Pancreas (tissue), 10 donors: ENCODE measurements at regions of chr3 and their contacts with region 1.

Region 1: DNA sequence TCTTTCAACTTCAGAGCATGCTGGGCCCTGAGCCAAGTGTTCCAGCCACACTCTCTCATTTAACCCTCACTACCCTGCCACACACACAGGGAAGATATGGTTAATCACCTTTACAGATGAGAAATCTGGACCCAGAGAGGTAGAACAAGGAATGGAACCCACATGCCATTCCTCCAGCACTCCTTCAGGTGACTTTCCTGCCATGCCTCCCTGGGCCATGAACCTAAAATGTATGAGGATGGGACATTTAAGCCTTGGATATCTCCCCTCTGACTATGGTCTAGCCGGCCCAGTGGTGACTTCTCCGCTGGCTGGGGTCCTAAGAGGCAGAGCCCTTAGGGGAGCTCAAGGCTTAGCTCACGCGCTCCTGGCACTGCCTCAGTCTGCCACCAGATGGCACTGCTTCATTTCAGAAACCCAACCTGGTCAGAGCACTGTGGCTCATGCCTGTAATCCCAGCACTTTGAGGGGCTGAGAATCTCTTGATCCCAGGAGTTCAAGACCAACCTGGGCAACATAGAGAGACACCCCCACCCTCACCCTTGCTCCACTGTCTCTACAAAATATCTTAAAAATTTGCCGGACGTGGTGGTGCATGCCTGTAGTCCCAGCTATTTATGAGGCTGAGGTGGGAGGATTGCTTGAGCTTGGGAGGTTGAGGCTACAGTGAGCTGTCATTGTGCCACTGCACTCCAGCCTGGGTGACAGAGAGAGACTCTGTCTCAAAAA is 2.2 kb upstream of the DCAF1 start:
- DNase-seq: peak; percentile 60 to 89 (median 80)
- ATAC-seq: peak in 3 of 4 donors; percentile 18 to 22 (median 20)
- H3K4me3 ChIP-seq: no peak overlapping the region
- H3K27ac ChIP-seq: no peak overlapping the region
- H3K4me1 ChIP-seq: peaks cover 0 to 7% (median 0%) of the 10 kb centered on the region in 3 donors
- H3K27me3 ChIP-seq: no peaks in the 10 kb centered on the region
- CTCF ChIP-seq: peak; percentile 82 to 93 (median 91)

Region 2: GRCh38 chr3:51669241-51670052 is 167.4 kb after region 1 on chr3:
- intact Hi-C with region 1: loop called (anchors 5 to 10 kb)
- DNase-seq: peak; percentile 81 to 96 (median 93)
- ATAC-seq: peak; percentile 52 to 78 (median 70)
- H3K4me3 ChIP-seq: no peak overlapping the region
- H3K27ac ChIP-seq: no peak overlapping the region
- H3K4me1 ChIP-seq: peaks cover 0 to 22% (median 6%) of the 10 kb centered on the region in 3 donors
- H3K27me3 ChIP-seq: no peaks in the 10 kb centered on the region
- CTCF ChIP-seq: peak; percentile 91 to 96 (median 94)

Region 3: DNA sequence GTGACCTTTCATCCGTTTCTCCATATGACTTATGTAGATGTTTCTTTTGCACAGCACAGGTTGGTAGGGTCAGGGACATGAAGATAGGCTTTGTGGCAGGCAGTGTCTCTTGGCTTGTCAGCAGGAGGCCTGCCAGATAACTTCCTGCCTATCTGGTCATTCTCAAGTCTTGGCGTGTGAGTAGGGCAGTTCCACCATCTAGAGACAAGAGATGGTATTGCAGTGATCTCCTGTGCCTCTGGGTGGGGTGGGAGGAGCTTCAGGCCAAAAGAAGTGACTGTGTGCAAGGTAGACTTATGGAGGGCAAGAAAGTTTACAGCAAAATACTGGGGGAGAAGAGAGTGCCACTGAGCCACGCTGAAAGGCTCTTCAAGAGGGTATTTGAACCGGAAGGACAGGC is 180.1 kb after region 1 on chr3:
- intact Hi-C with region 1: loop called in 1 of 3 experiments (anchors 5 kb)
- DNase-seq: peak in 4 of 6 donors; percentile 21 to 53 (median 34)
- ATAC-seq: peak; percentile 73 to 96 (median 91)
- H3K4me3 ChIP-seq: no peak overlapping the region
- H3K27ac ChIP-seq: no peak overlapping the region
- H3K4me1 ChIP-seq: no peaks in the 10 kb centered on the region
- H3K27me3 ChIP-seq: no peaks in the 10 kb centered on the region
- CTCF ChIP-seq: peak; percentile 21 to 55 (median 42)

Region 4: GRCh38 chr3:51734572-51734907 is 232.5 kb after region 1 on chr3:
- intact Hi-C with region 1: no loop called
- DNase-seq: no peak
- ATAC-seq: no peak
- H3K4me3 ChIP-seq: no peak overlapping the region
- H3K27ac ChIP-seq: no peak overlapping the region
- H3K4me1 ChIP-seq: no peaks in the 10 kb centered on the region
- H3K27me3 ChIP-seq: no peaks in the 10 kb centered on the region
- CTCF ChIP-seq: no peak

Region 5: DNA sequence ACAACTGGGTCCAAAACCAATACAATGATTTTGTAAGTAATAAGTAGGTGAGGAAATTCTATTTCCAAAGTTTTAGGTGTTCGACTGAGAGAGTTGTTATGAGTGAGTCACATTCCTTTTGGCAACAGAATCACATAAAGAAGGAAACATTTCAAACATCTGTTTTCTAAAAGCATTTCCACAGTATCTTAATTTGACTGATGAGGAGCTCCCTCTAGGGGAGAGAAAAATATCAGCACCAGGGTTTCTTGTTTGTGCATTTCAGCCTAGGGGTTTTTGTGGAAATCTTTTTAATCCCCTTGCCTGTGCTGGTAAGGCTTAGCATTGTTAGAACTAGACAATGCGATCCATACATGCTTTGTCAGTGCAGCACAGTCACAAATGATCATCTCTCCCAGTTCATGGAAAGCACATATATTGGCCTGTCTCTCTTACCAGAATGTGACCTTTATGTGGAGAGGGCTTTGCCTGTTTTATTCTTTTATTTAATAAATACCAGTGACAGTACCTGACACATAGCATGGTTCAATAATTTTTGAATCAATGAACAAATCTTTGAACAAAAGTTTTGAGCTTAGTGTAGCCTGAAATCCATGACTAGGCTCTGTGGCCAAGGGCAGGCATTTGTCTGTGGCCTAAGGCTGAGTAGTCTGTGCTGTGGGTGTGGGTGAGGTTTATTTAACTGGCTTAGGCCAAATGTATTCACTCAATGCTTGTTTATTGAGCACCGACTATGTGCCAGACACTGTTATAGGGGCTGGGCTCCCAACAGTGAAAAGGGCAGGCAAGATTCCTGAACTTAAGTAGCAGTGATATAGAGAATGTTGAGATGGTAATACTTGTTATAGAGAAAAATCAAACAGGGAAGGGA is 298.1 kb after region 1 on chr3:
- intact Hi-C with region 1: loop called (anchors 5 to 10 kb)
- DNase-seq: peak in 1 of 6 donors; percentile 39
- ATAC-seq: peak; percentile 76 to 89 (median 86)
- H3K4me3 ChIP-seq: no peak overlapping the region
- H3K27ac ChIP-seq: no peak overlapping the region
- H3K4me1 ChIP-seq: no peaks in the 10 kb centered on the region
- H3K27me3 ChIP-seq: peaks cover 0 to 5% (median 0%) of the 10 kb centered on the region in 4 donors
- CTCF ChIP-seq: peak; percentile 37 to 76 (median 59)

Region 6: GRCh38 chr3:51887620-51888019 is 385.6 kb after region 1 on chr3:
- intact Hi-C with region 1: no loop called
- DNase-seq: peak in 2 of 6 donors; percentile 23 to 61
- ATAC-seq: peak in 3 of 4 donors; percentile 34 to 65 (median 54)
- H3K4me3 ChIP-seq: no peak overlapping the region
- H3K27ac ChIP-seq: no peak overlapping the region
- H3K4me1 ChIP-seq: no peaks in the 10 kb centered on the region
- H3K27me3 ChIP-seq: no peaks in the 10 kb centered on the region
- CTCF ChIP-seq: no peak